CD8-positive, alpha-beta T cell (primary cell): ENCODE measurements at regions of chr1 and their contacts with region 1.

Region 1: GRCh38 chr1:45521398-45522323 is at the start of gene PRDX1:
- DNase-seq: peak; percentile 90 to 98 (median 93)
- ATAC-seq: peak; percentile 90
- H3K4me3 ChIP-seq: peak within 1 kb of the TSS; percentile 86 to 99
- H3K4me3 Mint-ChIP-seq: peak within 1 kb of the TSS; percentile 94
- H3K27ac ChIP-seq: peak within 1 kb of the TSS; percentile 75 to 78
- H3K27ac Mint-ChIP-seq: peak within 1 kb of the TSS; percentile 90
- H3K4me1 ChIP-seq: peaks cover 15% of the 10 kb centered on the region
- H3K4me1 Mint-ChIP-seq: peaks cover 26% of the 10 kb centered on the region
- H3K27me3 ChIP-seq: peaks cover 0 to 3% of the 10 kb centered on the region in 2 experiments
- H3K27me3 Mint-ChIP-seq: no peaks in the 10 kb centered on the region
- CTCF ChIP-seq: no peak
- total RNA-seq, gene PRDX1: 20.4 to 27.0 TPM

Region 2: GRCh38 chr1:45543581-45544417 is 22.1 kb after region 1 on chr1:
- CTCF ChIA-PET with region 1: interaction called, 3 read pairs
- POLR2A ChIA-PET with region 1: interaction called, 9 read pairs
- intact Hi-C with region 1: loop called in 1 of 2 experiments (anchors 2 kb)
- DNase-seq: peak; percentile 35 to 95 (median 70)
- ATAC-seq: peak; percentile 96
- H3K4me3 ChIP-seq: peak overlapping the region in 1 of 2 experiments; percentile 10
- H3K4me3 Mint-ChIP-seq: peak overlapping the region; percentile 33
- H3K27ac ChIP-seq: peak overlapping the region in 1 of 2 experiments; percentile 58
- H3K27ac Mint-ChIP-seq: peak overlapping the region; percentile 49
- H3K4me1 ChIP-seq: peaks cover 16% of the 10 kb centered on the region
- H3K4me1 Mint-ChIP-seq: peaks cover 21% of the 10 kb centered on the region
- H3K27me3 ChIP-seq: no peaks in the 10 kb centered on the region
- H3K27me3 Mint-ChIP-seq: no peaks in the 10 kb centered on the region
- CTCF ChIP-seq: no peak

Region 3: GRCh38 chr1:45550401-45551351 is 29.0 kb after region 1 on chr1 and contains the start of gene AKR1A1:
- CTCF ChIA-PET with region 1: no interaction called
- POLR2A ChIA-PET with region 1: interaction called, 28 read pairs
- intact Hi-C with region 1: loop called (anchors 1 kb)
- DNase-seq: peak; percentile 71 to 93 (median 83)
- ATAC-seq: peak; percentile 94
- H3K4me3 ChIP-seq: peak within 1 kb of the TSS; percentile 85 to 96
- H3K4me3 Mint-ChIP-seq: peak within 1 kb of the TSS; percentile 95
- H3K27ac ChIP-seq: peak within 1 kb of the TSS; percentile 76 to 91
- H3K27ac Mint-ChIP-seq: peak within 1 kb of the TSS; percentile 93
- H3K4me1 ChIP-seq: peaks cover 16% of the 10 kb centered on the region
- H3K4me1 Mint-ChIP-seq: peaks cover 23% of the 10 kb centered on the region
- H3K27me3 ChIP-seq: no peaks in the 10 kb centered on the region
- H3K27me3 Mint-ChIP-seq: no peaks in the 10 kb centered on the region
- CTCF ChIP-seq: no peak
- total RNA-seq, gene AKR1A1: 27.2 to 31.9 TPM